Stomach (tissue), 19 donors: ENCODE measurements at regions of chr11 and their contacts with region 1.

Region 1: GRCh38 chr11:131674051-131674755 is 303.8 kb downstream of the NTM start:
- DNase-seq: peak; percentile 71 to 92
- H3K4me3 ChIP-seq: no peak overlapping the region
- H3K27ac ChIP-seq: no peak overlapping the region
- H3K4me1 ChIP-seq: no peaks in the 10 kb centered on the region
- H3K27me3 ChIP-seq: peaks cover 0 to 8% (median 0%) of the 10 kb centered on the region in 3 donors
- CTCF ChIP-seq: peak in 5 of 7 experiments; percentile 66 to 91 (median 80)
- EP300 ChIP-seq: no peak
- POLR2A ChIP-seq: no peak

Region 2: GRCh38 chr11:130924770-130925169 is 749.4 kb before region 1 on chr11:
- intact Hi-C with region 1: loop called (anchors 10 kb)
- DNase-seq: no peak
- H3K4me3 ChIP-seq: no peak overlapping the region
- H3K27ac ChIP-seq: no peak overlapping the region
- H3K4me1 ChIP-seq: no peaks in the 10 kb centered on the region
- H3K27me3 ChIP-seq: no peaks in the 10 kb centered on the region
- CTCF ChIP-seq: no peak
- EP300 ChIP-seq: no peak
- POLR2A ChIP-seq: no peak

Region 3: GRCh38 chr11:131064373-131064991 is 609.7 kb before region 1 on chr11:
- intact Hi-C with region 1: loop called (anchors 10 kb)
- DNase-seq: peak; percentile 39 to 78
- H3K4me3 ChIP-seq: no peak overlapping the region
- H3K27ac ChIP-seq: no peak overlapping the region
- H3K4me1 ChIP-seq: peaks cover 0 to 7% (median 0%) of the 10 kb centered on the region in 4 donors
- H3K27me3 ChIP-seq: peaks cover 0 to 13% (median 4%) of the 10 kb centered on the region in 3 donors
- CTCF ChIP-seq: peak in 5 of 7 experiments; percentile 25 to 66 (median 59)
- EP300 ChIP-seq: no peak
- POLR2A ChIP-seq: no peak

Region 4: DNA sequence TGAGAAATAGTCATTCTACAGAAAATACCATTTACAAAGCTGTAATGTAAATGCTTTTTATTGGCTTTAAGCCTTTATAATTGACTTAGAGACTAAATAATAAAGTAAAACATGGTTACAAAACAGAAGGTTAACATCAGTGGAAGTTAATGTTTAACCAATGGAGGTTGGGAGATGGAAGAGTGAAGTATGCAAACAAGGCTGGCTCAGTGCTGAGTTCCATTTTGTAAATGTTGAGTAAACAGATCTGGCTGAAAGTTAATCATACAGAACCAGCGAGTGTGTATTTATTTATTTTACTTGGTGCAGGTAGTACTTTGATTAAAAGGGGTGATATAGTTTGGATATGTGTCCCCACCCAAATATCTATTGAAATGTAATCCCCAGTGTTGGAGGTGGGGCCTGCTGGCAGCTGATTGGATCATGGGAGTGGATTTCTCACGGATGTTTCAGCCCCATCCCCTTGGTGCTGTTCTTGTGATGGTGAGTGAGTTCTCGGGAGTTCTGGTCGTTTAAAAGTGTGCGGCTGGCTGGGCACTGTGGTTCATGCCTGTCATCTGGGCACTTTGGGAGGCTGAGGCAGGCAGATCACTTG is 1030.7 kb after region 1 on chr11:
- intact Hi-C with region 1: no loop called
- DNase-seq: peak; percentile 32 to 89
- H3K4me3 ChIP-seq: no peak overlapping the region
- H3K27ac ChIP-seq: peak overlapping the region in 1 of 5 donors; percentile 65
- H3K4me1 ChIP-seq: peaks cover 0 to 8% (median 2%) of the 10 kb centered on the region in 4 donors
- H3K27me3 ChIP-seq: no peaks in the 10 kb centered on the region
- CTCF ChIP-seq: no peak
- EP300 ChIP-seq: no peak
- POLR2A ChIP-seq: no peak